ENCODE measurements at regions of chr19 and their contacts with region 1.

Region 1: GRCh38 chr19:18251587-18252369 is 22.5 kb downstream of the IQCN start:
- DNase-seq: peak; percentile 66 to 95
- H3K4me3 ChIP-seq: no peak overlapping the region
- CTCF ChIP-seq: peak in 1 of 3 donors; percentile 83
- POLR2A ChIP-seq: no peak

Region 2: DNA sequence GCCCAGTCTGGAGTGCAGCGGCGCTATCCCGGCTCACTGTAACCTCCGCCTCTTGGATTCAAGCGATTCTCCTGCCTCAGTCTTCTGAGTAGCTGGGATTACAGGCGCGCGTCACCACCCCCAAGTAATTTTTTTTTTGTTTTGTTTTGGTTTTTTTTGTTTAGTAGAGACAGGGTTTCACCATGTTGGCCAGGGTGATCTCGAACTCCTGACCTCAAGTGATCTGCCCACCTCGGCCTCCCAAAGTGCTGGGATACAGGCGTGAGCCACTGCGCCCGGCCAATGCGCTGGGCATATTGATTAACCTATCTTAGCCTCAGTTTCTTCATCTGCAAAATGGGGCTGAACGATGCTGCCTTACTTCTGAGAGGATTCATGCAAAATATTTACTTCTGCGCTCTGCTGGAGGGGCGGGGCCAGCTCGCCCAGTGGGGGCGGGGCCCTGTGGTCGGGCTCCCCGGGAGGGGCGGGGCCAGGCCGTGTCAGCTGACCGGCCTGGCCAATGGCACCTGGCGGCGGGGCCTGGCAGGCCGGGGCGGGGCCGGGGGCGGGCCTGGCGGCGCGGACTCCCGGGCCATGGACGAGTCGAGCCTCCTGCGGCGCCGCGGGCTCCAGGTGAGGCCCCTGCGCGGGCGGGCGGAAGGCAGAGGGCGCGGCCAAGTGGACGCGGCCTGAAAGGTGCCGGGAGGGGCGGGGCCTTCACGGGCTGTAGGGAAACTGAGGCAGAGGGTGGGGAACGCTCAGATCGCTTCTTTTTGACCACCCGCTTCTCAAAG is 154.4 kb before region 1 on chr19 and contains the start of gene MAST3:
- intact Hi-C with region 1: no loop called
- DNase-seq: peak; percentile 65 to 95
- H3K4me3 ChIP-seq: no peak within 1 kb of the TSS
- CTCF ChIP-seq: no peak
- POLR2A ChIP-seq: no peak
- total RNA-seq, gene MAST3: 12.9 to 19.8 (median 17.0) TPM

Region 3: GRCh38 chr19:18167975-18168645 is 83.7 kb before region 1 on chr19:
- intact Hi-C with region 1: loop called (anchors 2 kb)
- DNase-seq: no peak
- H3K4me3 ChIP-seq: no peak overlapping the region
- CTCF ChIP-seq: no peak
- POLR2A ChIP-seq: no peak

Region 4: GRCh38 chr19:18214779-18215433 is 36.9 kb before region 1 on chr19:
- intact Hi-C with region 1: loop called (anchors 5 kb)
- DNase-seq: no peak
- H3K4me3 ChIP-seq: no peak overlapping the region
- CTCF ChIP-seq: no peak
- POLR2A ChIP-seq: no peak

Measured in lower leg skin (tissue), 4 donors.